ENCODE measurements at regions of chr10 and their contacts with region 1.

Region 1: GRCh38 chr10:95246579-95247051 is 44.2 kb downstream of the PDLIM1 start:
- ATAC-seq: peak; percentile 39 to 84 (median 69)
- H3K4me3 ChIP-seq: no peak overlapping the region
- H3K27ac ChIP-seq: no peak overlapping the region
- H3K4me1 ChIP-seq: no peaks in the 10 kb centered on the region

Region 2: DNA sequence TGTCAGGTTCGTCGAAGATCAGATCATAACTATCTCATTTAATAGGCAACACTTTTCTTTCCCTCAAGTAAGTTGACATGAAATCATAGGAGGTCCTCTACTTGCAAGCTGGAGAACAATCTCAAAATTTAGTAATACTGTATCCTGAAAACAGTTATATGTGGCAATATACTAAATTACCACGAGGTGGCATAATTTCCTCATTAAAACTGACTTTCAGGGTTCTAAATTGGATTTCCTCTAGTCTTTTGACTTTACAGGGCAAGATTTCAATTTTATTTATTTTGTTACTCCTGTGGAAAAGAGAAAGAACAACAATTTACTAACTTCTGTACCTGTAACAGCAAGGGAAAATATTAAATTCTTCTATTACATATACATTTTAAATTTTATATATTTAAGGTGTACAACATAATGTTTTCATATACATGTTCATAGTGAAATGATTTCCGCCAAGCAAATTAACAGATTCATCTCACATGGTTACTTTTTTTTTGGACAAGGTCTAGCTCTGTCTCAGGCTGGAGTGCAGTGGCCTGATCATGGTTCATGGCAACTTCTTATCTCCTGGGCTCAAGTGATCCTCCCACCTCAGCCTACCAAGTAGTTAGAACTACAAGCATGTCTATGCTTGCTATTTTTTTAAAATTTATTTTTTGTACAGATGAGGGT is 616.5 kb before region 1 on chr10:
- in situ Hi-C with region 1: loop called in 1 of 9 experiments (anchors 25 kb)
- ATAC-seq: no peak
- H3K4me3 ChIP-seq: no peak overlapping the region
- H3K27ac ChIP-seq: no peak overlapping the region
- H3K4me1 ChIP-seq: no peaks in the 10 kb centered on the region

Region 3: GRCh38 chr10:95363303-95363912 is 116.8 kb after region 1 on chr10:
- in situ Hi-C with region 1: loop called in 5 of 9 experiments (anchors 5 to 25 kb)
- ATAC-seq: peak; percentile 53 to 81 (median 66)
- H3K4me3 ChIP-seq: no peak overlapping the region
- H3K27ac ChIP-seq: no peak overlapping the region
- H3K4me1 ChIP-seq: no peaks in the 10 kb centered on the region

Region 4: DNA sequence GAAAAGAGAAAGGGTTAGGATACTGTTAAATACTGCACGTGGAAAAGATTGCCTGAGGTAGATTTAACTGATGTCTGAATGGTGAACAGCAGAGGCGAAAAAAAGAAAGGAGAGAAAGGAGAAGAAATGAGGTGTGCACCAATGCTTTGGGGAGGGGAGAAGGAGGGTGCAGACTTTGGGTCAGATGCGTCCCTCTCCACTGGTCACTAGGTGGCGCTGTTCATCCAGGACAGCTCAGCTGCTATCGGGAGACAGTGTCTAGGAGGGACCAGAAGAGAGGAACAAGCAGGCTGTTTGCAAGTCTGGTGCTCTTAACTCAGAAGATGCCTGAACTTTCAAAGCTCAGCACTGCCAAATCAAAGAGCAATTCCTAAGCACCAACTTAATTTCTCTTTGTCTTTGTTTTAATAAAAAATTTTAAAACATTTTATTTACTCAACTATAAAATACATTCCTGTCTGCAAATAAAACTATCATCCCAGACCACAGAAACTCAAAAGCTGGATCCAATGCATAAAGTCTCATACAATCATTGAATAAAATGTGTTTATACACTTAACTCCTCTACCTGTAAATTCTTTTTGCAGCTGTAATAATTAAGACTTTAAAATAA is 128.1 kb after region 1 on chr10:
- in situ Hi-C with region 1: loop called in 4 of 9 experiments (anchors 10 to 25 kb)
- ATAC-seq: peak; percentile 86 to 100 (median 93)
- H3K4me3 ChIP-seq: no peak overlapping the region
- H3K27ac ChIP-seq: no peak overlapping the region
- H3K4me1 ChIP-seq: no peaks in the 10 kb centered on the region

Region 5: DNA sequence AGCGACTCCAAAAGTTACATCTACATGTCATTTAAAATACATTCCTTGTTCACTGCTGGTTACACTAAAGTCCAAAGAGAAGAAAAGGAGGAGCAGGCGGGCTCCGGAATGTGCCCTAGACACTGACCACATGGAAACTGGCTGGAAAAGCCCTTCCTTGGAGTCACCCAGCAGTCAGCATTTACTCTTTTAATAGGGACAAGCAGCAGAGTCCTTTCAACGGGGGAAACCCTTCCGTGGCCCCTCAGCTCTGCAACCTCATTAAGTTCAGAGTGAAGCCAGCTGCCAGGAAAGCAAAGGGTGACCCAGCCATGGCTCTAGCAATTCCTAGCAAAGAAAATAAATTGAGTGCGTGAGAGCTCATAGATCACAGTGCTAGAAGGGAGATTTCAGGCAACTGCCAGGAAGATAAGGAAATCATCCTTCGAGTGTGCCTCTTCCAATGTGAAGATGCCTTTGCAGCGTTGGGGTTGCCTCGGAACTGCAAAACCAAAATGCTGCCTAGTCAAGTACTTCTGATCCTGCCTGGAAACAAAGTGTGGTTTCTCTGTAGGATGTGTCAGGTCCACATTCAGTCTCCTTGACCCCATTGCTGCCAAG is 212.9 kb after region 1 on chr10:
- in situ Hi-C with region 1: no loop called
- ATAC-seq: peak in 6 of 8 experiments; percentile 44 to 92 (median 82)
- H3K4me3 ChIP-seq: no peak overlapping the region
- H3K27ac ChIP-seq: no peak overlapping the region
- H3K4me1 ChIP-seq: peaks cover 9 to 12% of the 10 kb centered on the region in 2 donors

Region 6: DNA sequence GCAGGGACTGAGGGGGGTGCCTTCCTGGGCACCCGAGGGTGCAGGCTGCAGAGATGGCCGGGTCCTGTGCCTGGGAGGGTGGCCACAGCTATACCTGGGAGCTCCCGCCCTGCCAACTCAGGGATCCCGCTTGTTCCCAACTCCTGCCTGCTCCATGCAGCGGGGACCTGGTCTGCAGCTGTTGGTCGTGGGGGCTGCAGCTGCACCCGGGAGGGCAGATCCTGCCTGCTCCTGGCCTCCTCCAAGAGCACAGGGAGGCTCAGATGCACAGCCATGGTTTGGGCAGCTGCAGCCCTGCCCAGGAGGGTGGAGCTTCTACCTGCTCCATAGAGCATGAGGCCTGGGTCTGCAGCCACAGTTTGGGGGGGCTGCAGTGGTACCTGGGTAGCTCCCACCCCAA is 460.4 kb after region 1 on chr10:
- in situ Hi-C with region 1: no loop called
- ATAC-seq: no peak
- H3K4me3 ChIP-seq: no peak overlapping the region
- H3K27ac ChIP-seq: no peak overlapping the region
- H3K4me1 ChIP-seq: no peaks in the 10 kb centered on the region

Measured in motor neuron (in vitro differentiated cells).